ENCODE measurements at regions of chr2 and their contacts with region 1.

Region 1: DNA sequence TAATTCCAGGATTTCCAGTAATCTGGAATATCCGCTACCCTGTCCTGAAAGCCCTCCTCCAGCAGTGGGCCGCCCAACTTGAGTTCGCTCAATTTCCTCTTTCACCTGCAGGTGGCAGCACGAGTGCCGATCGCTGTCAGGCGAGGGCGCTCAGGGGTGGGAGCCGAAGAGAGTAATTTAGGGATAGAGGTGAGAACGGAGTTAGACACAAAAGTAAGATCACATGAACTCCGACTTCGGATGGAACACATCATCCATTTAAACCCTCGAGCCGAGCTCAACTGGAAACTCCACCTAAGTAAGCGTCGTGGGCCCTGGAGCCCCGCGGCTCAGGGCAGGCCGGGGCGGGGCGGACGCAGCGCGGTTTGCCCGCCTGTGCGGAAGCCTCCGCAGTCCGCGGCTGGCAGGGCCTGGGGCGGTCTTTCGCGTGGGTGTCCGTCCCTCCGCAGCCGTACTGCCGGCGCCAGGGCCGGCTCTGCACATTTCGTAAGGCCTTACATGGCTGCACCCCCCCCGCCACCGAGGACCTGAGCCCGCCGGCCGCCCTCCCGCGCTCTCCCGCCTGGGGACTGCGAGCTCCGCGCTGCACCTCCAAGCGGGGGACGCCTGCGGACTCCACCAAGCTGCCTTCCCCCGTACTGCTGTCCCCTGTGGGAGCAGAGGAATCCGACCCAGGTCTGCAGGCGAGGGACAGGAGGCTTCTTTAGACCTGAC is 61.2 kb downstream of the SEMA4F start:
- DNase-seq: peak; percentile 91
- H3K4me3 Mint-ChIP-seq: peak overlapping the region; percentile 75
- H3K27ac Mint-ChIP-seq: peak overlapping the region; percentile 66
- H3K4me1 Mint-ChIP-seq: no peaks in the 10 kb centered on the region
- H3K27me3 Mint-ChIP-seq: no peaks in the 10 kb centered on the region
- CTCF ChIP-seq: peak; percentile 82

Region 2: DNA sequence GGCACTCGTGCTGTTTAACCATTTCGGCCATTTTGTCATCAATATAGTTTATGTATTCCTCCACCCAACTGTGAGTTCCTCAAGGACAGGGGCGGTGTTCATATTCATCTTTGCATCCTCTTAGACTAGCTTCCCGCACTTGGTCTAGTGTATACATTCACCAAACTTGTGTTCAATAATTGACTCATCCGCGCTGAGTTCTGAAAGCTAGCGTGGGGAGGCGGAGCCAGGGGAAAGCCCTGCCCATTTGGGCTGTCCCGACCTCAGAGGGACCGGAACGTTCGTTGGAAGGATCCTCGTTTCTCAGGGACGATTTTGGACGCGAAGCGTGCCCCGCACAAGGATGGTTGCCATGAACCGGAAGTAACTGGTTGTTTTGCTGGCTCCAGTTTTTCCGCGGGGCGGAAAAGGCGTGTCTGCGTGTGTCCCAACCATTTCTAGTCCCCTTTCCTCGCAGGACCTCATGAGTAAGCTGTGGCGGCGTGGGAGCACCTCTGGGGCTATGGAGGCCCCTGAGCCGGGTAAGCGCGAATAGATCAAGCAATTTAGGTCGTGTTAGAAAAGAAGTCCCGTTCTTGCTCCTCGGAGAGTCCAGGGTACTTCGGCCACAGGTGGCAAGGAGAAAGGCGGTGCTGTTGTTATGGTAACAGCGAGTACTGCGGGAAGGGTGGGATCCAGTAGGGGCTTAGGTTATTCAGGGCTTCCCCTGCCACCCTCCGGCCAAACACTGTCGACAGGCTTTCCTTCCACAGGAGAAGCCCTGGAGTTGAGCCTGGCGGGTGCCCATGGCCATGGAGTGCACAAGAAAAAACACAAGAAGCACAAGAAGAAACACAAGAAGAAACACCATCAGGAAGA is 260.4 kb before region 1 on chr2 and contains the start of gene INO80B:
- CTCF ChIA-PET with region 1: no interaction called
- intact Hi-C with region 1: no loop called
- DNase-seq: peak; percentile 96
- H3K4me3 Mint-ChIP-seq: peak within 1 kb of the TSS; percentile 83
- H3K27ac Mint-ChIP-seq: peak within 1 kb of the TSS; percentile 35
- H3K4me1 Mint-ChIP-seq: peaks cover 44% of the 10 kb centered on the region
- H3K27me3 Mint-ChIP-seq: peaks cover 12% of the 10 kb centered on the region
- CTCF ChIP-seq: no peak
- total RNA-seq, gene INO80B: 41.7 and 42.1 TPM in 2 replicates

Region 3: DNA sequence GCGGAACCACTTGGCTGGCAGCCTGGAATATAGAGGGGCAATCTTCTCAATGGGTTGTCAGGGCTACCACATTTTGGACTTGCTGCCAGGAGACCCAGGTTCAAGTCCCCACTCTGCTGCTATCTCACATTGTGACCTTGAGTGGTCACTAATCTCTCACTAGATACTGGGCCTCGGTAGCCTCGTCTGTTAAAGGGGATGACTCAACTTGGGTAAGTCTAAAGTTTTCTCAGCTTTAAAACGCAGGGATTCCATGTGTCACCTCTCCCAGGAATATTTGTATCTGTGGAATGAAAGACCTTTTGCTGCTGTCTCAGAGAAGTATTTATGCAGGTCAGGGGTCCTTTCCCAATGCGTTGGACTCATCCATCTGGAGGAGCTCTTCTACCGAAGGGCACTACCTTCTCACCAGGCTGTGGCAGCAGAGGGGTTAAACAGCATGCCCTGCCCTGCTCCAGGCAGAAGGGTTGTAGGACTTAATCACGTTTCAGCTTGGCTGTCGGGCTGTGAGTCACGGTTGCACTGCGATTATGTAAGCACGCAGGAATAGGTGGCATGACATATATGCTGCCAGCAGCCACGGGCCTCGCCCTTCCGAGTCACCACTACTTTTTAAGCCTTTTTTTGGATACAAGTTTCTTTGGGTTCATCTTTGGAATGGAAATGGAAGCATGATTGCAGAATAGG is 25.3 kb after region 1 on chr2:
- CTCF ChIA-PET with region 1: interaction called, 3 read pairs
- intact Hi-C with region 1: loop called (anchors 1 kb)
- DNase-seq: peak; percentile 86
- H3K4me3 Mint-ChIP-seq: peak overlapping the region; percentile 38
- H3K27ac Mint-ChIP-seq: peak overlapping the region; percentile 67
- H3K4me1 Mint-ChIP-seq: peaks cover 42% of the 10 kb centered on the region
- H3K27me3 Mint-ChIP-seq: no peaks in the 10 kb centered on the region
- CTCF ChIP-seq: no peak

Region 4: GRCh38 chr2:74756356-74756890 is 41.2 kb after region 1 on chr2:
- CTCF ChIA-PET with region 1: interaction called, 7 read pairs
- intact Hi-C with region 1: loop called (anchors 5 kb)
- DNase-seq: no peak
- H3K4me3 Mint-ChIP-seq: no peak overlapping the region
- H3K27ac Mint-ChIP-seq: peak overlapping the region; percentile 10
- H3K4me1 Mint-ChIP-seq: peaks cover 20% of the 10 kb centered on the region
- H3K27me3 Mint-ChIP-seq: no peaks in the 10 kb centered on the region
- CTCF ChIP-seq: no peak

Region 5: DNA sequence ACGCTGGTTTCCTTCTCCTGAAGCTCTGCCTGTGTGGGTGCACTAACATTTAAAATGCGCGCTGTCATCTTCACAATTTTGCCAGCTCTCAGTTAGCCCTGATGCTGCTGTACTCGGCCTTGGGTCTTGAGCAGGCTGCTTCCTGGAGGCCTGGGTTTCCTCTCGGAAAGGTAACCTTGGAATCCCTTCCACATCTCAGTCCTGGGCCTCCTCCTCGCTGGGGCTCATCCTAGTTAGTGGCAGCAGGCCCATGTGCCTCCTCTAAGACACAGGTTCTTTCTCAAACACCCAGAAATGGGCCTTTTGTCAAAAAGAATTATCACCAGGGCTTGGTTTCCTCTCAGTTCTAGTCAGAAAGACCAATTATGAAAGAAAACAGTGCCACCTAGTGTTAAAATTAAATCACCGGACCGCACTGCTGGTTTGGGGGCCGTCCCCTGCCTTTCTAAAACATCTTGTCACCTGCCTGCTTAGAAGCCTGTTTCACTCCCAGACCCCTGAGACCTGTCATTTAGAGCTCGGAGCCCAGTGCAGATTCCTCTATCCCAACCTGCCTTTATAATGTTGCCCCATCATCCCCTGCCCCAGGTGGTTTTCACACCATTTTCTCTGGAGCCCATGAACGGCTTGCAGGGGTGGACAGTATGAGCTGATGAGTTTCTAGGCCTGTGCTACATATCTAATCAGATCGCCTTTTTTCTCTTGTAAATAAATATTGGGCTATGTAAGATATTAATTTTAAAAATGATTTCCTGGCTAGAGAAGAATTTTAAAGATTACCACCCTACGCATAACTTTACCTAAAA is 161.0 kb after region 1 on chr2:
- CTCF ChIA-PET with region 1: no interaction called
- intact Hi-C with region 1: loop called (anchors 1 kb)
- DNase-seq: peak; percentile 51
- H3K4me3 Mint-ChIP-seq: no peak overlapping the region
- H3K27ac Mint-ChIP-seq: no peak overlapping the region
- H3K4me1 Mint-ChIP-seq: peaks cover 24% of the 10 kb centered on the region
- H3K27me3 Mint-ChIP-seq: no peaks in the 10 kb centered on the region
- CTCF ChIP-seq: peak; percentile 66